ENCODE measurements at regions of chr12 and their contacts with region 1.

Region 1: DNA sequence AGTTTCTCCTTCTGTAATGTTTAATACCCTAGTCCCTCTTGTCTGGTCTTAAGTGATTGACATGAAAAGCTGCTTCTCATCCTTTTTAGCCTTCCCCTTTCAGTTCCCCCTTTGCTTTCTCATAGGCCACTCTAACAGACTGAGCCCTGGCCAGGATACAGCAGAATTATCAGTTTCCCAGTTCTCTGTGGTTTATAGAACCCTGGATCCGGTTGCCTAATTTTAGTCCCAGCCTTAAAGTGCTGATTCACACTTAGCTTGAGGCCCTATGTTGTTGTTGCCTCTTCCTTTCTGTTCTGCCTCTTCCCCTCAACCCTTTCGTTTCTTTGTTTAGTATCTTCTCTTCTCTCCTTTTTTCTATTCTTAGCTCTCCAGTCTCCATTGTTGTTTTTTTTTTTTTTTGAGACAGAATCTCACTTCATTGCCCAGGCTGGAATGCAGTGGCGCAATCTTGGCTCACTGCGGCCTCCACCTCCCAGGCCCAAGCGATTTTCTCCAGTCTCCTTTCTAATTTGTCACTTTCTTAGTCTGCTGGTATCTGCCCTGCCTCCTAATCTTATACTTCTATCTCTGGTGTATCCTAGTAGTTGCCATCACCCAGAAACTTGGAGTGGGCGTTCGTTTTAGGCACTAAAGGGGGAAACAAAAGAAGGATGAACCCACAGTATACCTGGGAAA is 2.9 kb upstream of the BIN2 start:
- DNase-seq: peak in 1 of 10 donors; percentile 14
- ATAC-seq: no peak
- H3K4me3 Mint-ChIP-seq: peak overlapping the region; percentile 4 to 81 (median 64)
- H3K27ac Mint-ChIP-seq: peak overlapping the region; percentile 80 to 97 (median 92)
- H3K4me1 Mint-ChIP-seq: peaks cover 40 to 86% (median 84%) of the 10 kb centered on the region in 4 donors
- H3K27me3 Mint-ChIP-seq: no peaks in the 10 kb centered on the region

Region 2: GRCh38 chr12:51307655-51308593 is 19.0 kb before region 1 on chr12:
- POLR2A ChIA-PET with region 1: interaction called, 406 read pairs
- DNase-seq: peak in 2 of 10 donors; percentile 29 to 32
- ATAC-seq: peak; percentile 70 to 82
- H3K4me3 Mint-ChIP-seq: peak overlapping the region in 9 of 10 donors; percentile 15 to 74 (median 42)
- H3K27ac Mint-ChIP-seq: peak overlapping the region; percentile 81 to 93 (median 92)
- H3K4me1 Mint-ChIP-seq: peaks cover 23 to 80% (median 66%) of the 10 kb centered on the region in 4 donors
- H3K27me3 Mint-ChIP-seq: no peaks in the 10 kb centered on the region

Region 3: DNA sequence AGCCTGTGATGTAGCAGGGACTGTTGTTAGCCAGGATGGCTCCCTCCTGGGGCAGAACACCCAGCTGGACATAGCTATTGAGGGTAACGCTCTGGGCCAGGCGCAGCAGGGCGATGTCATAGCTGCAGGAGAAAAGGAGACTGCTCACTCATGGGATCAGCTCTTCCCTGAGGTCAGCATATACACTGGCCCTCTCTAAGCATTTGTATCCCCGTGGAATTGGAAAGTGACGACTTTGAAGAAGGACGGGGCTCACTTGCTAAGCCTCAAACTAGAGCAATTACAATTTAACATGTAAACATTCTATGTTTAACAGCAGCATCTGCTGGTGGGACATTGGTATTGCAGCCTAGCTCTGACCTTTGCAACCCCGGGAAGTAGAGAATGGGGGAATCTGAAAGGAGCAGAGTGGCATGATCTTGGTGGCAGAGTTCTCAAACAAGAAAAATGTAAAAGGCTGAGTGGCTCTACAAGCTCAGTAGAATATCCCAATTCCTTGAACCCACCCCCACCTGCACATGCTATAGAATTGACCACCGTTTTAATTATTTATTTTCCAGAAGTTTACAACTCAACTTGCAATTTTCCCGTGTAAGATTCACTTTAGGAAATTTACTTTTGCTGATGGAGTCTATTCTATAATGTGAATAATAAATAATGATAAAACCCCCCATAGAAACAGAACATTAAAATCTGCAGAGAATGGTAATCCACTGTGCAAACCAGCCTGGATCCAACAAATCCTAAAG is 14.5 kb after region 1 on chr12:
- POLR2A ChIA-PET with region 1: interaction called, 406 read pairs
- DNase-seq: peak; percentile 33 to 86 (median 69)
- ATAC-seq: peak; percentile 93 to 98
- H3K4me3 Mint-ChIP-seq: peak overlapping the region; percentile 23 to 81 (median 59)
- H3K27ac Mint-ChIP-seq: peak overlapping the region in 9 of 10 donors; percentile 5 to 90 (median 83)
- H3K4me1 Mint-ChIP-seq: peaks cover 11 to 35% (median 18%) of the 10 kb centered on the region in 4 donors
- H3K27me3 Mint-ChIP-seq: no peaks in the 10 kb centered on the region